ENCODE measurements at regions of chr12 and their contacts with region 1.

Region 1: DNA sequence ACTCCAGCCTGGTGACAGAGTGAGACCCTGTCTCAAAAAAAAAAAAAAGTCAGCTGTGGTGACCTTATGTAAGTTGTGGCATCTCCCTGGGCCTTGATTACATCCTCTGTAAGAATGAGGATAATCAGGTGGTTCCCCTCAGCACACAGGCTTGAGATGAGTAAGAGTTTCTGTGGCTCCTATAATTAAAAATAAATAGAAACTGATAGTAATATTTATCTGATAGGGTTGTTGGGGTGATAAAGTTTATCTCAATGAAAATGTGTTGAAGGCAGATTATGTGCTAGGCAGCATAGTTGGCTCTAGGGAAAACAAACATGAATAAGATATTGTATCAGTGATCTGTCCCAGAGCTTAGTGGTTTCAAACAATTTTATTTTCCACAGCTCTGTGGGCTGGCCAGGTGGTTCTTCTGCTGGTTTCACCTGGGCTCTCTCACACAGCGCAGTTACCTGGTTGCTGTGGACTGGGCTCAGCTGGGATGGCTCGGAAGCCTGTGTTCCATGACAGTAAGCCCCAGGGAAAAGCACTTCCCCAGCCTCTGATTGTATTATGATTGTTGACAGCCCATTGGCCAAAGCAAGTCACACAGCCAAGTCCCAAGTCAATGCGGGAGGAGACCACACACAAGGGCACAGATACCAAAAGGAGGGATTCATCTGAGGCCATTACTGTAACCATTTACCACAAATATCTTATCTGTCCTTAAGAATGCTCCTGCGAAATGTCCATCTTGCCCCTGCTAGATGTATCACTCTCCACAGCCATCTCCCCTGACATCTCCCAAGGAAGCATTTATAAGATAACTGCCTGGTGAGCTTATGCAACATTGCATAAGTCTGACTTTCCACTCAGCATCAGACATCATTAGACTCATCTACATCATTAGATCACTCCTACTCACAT is 151.7 kb downstream of the NUAK1 start:
- DNase-seq: peak; percentile 95
- ATAC-seq: peak; percentile 75
- H3K4me3 ChIP-seq: no peak overlapping the region
- H3K27ac ChIP-seq: peak overlapping the region; percentile 89
- H3K4me1 ChIP-seq: peaks cover 20% of the 10 kb centered on the region
- H3K27me3 ChIP-seq: no peaks in the 10 kb centered on the region
- CTCF ChIP-seq: no peak
- POLR2A ChIP-seq: no peak; the same call in 1 of the 2 replicates
- RAD21 ChIP-seq: 0 out of 2 replicates have a peak, but pooled peaks have one; percentile 3

Region 2: DNA sequence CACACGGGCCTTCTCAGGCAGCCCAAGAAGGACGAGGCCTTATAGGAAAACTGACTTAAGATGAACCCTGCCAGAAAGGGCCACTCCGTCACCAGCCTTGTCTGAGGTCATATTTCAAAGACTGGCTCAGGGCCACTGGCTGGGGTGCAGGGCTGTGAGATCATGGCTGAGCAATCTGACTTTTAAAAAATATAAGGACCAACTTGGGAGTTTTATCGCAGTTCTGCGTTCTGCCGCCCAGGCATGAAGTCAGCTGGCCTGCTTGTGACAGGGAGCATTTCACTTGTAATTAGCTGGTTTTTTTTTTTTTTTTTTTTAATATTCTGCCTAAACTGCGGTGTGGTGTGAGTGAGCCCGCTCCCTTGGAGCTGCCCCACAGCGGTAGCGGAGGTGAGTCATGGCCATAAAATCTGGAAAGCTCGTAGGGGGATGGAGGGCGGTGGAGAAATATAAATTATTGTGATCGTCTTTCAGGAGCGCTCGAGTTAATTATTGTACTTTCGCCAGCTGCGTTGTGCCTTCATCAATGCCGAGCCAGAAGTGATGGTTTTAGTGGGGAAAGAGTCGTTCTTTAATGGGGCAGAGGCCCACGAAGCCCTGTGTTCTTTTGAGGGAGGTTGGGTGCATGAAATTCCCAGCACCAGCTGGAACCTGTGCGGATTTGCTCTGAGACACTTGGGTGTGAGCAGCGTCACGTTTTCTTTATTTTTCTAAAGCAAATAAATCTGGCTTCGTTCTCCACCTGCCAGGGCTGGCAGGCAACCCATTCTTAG is 424.6 kb before region 1 on chr12:
- CTCF ChIA-PET with region 1: no interaction called
- POLR2A ChIA-PET with region 1: no interaction called
- dilution Hi-C with region 1: no loop called
- in situ Hi-C with region 1: no loop called
- intact Hi-C with region 1: loop called (anchors 2 kb)
- DNase-seq: peak; percentile 90
- ATAC-seq: peak; percentile 93
- H3K4me3 ChIP-seq: peak overlapping the region; percentile 5; the same call in 1 of the 2 replicates
- H3K27ac ChIP-seq: peak overlapping the region; percentile 70
- H3K4me1 ChIP-seq: peaks cover 9% of the 10 kb centered on the region
- H3K27me3 ChIP-seq: no peaks in the 10 kb centered on the region
- CTCF ChIP-seq: no peak
- POLR2A ChIP-seq: no peak
- RAD21 ChIP-seq: no peak

Region 3: GRCh38 chr12:106096376-106096775 is 109.3 kb after region 1 on chr12:
- CTCF ChIA-PET with region 1: no interaction called
- POLR2A ChIA-PET with region 1: no interaction called
- dilution Hi-C with region 1: no loop called
- in situ Hi-C with region 1: no loop called
- intact Hi-C with region 1: no loop called
- DNase-seq: no peak
- ATAC-seq: no peak
- H3K4me3 ChIP-seq: no peak overlapping the region
- H3K27ac ChIP-seq: no peak overlapping the region
- H3K4me1 ChIP-seq: peaks cover 3% of the 10 kb centered on the region
- H3K27me3 ChIP-seq: no peaks in the 10 kb centered on the region
- CTCF ChIP-seq: no peak
- POLR2A ChIP-seq: no peak
- RAD21 ChIP-seq: no peak